WTC11 (cell line): ENCODE measurements at regions of chr11 and their contacts with region 1.

Region 1: GRCh38 chr11:76598426-76598839 is 72.1 kb downstream of the LRRC32 start:
- DNase-seq: peak; percentile 47
- ATAC-seq: peak; percentile 85
- H3K4me3 Mint-ChIP-seq: no peak overlapping the region
- H3K27ac Mint-ChIP-seq: no peak overlapping the region
- H3K4me1 Mint-ChIP-seq: 0 out of 2 replicates have a peak, but pooled peaks cover 7% of the 10 kb centered on the region
- H3K27me3 Mint-ChIP-seq: no peaks in the 10 kb centered on the region
- CTCF ChIP-seq: 0 out of 2 replicates have a peak, but pooled peaks have one; percentile 10

Region 2: DNA sequence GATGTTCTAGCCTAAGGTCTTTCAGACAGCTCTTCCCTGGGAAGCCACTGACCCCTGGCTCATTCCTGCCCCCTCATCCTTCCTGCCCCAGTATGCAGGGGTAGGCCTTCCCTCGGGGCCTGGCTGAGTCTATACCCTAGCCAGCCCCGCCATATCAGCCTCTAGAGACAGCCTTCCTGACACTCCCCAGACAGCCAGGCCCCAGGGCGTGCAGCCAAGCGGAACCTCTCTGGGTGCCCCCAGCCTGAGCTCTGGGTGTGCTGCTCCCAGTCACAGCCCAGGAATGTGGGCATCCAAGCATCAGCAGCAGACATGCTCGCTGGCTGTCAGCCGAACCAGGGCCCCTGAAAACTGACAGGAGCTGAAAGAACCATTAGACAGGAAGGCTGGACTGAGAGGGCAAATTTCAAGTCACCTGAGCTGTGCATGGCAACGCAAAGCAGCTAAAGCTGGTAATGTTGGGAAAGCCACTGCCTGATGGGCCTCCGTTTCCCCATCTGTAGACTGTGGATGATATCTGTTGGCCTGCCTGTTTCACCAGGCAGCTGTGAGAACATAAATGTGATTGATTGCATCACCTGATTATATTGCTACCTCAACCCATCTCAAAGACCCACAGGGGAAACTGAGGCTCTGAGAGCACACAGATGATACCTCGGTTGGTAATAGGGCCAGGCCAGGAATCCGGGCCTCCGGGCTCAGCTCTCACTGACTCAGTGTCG is 21.1 kb before region 1 on chr11:
- CTCF ChIA-PET with region 1: interaction called, 23 read pairs
- POLR2A ChIA-PET with region 1: no interaction called
- DNase-seq: no peak
- ATAC-seq: no peak; the same call in 1 of the 2 replicates
- H3K4me3 Mint-ChIP-seq: no peak overlapping the region
- H3K27ac Mint-ChIP-seq: no peak overlapping the region
- H3K4me1 Mint-ChIP-seq: peaks cover 22% of the 10 kb centered on the region
- H3K27me3 Mint-ChIP-seq: no peaks in the 10 kb centered on the region
- CTCF ChIP-seq: no peak

Region 3: DNA sequence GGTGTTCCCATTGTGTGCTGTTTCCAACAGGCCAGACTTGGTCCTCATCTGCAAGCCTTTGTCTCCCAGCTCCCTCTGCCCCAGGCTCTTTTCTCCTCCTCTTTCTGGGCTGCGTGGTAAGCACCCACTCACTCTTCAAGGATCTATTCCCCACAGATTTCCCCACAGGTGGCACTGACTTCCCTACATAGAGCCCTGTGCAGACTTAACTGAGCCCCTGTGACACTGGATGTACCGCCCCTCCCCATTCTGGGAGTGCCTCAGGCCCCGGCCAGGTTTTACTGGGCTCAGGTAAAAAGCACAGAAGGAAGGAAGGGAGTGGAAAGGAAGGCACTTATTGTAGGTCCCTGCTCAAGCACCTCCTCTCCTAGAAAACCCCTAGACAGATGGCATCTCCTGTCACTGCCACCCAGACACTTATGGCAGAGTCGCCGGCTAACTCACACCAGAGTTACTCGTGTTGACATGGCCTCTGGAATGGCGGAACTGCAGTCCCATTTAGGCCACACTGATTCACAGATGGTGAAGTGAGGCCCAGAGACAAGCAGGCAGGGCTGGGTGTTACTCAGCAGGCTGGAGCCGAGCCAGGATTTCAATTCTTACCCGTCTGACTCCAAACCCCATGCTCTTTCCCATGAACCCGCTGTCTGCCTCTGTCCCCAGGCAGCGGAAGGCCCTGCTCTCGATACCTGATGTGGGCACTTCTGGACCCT is 24.9 kb after region 1 on chr11:
- CTCF ChIA-PET with region 1: no interaction called
- POLR2A ChIA-PET with region 1: no interaction called
- DNase-seq: no peak
- ATAC-seq: no peak
- H3K4me3 Mint-ChIP-seq: no peak overlapping the region
- H3K27ac Mint-ChIP-seq: no peak overlapping the region
- H3K4me1 Mint-ChIP-seq: 0 out of 2 replicates have a peak, but pooled peaks cover 4% of the 10 kb centered on the region
- H3K27me3 Mint-ChIP-seq: peaks cover 4% of the 10 kb centered on the region; the same call in 1 of the 2 replicates
- CTCF ChIP-seq: no peak

Region 4: DNA sequence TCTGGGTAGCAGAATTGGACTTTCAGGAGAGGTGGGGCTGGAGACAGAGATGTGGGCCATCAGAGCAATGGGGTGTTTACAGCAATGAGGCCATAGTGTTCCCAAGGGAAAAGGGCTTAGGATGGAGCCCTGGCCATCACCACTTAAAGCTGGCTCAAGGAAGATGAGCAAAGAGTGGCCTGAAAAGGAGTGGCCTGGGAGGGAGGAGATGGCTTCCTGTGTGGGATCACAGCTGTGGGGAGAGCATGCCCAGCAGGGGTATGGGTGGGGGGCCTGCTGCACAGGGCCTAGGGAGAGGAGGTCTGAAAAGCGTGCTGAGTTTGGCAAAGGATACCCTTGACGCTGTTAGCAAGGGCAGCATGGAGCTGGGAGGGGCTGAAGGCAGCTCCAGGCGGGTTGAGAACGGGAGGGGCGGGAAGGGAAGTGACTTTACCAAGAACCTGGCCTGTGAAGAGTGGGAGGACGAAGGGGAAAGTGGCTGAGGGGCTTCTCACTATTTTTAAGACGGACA is 58.2 kb after region 1 on chr11:
- CTCF ChIA-PET with region 1: interaction called, 14 read pairs
- POLR2A ChIA-PET with region 1: no interaction called
- DNase-seq: no peak
- ATAC-seq: 0 out of 2 replicates have a peak, but pooled peaks have one; percentile 14
- H3K4me3 Mint-ChIP-seq: no peak overlapping the region
- H3K27ac Mint-ChIP-seq: no peak overlapping the region
- H3K4me1 Mint-ChIP-seq: peaks cover 14% of the 10 kb centered on the region
- H3K27me3 Mint-ChIP-seq: no peaks in the 10 kb centered on the region
- CTCF ChIP-seq: no peak

Region 5: GRCh38 chr11:76680518-76681425 is 82.3 kb after region 1 on chr11:
- CTCF ChIA-PET with region 1: interaction called, 60 read pairs
- POLR2A ChIA-PET with region 1: no interaction called
- DNase-seq: peak; percentile 88
- ATAC-seq: peak; percentile 95
- H3K4me3 Mint-ChIP-seq: no peak overlapping the region
- H3K27ac Mint-ChIP-seq: no peak overlapping the region
- H3K4me1 Mint-ChIP-seq: no peaks in the 10 kb centered on the region
- H3K27me3 Mint-ChIP-seq: peaks cover 4% of the 10 kb centered on the region; the same call in 1 of the 2 replicates
- CTCF ChIP-seq: peak; percentile 75

Region 6: GRCh38 chr11:76700177-76701100 is 102.0 kb after region 1 on chr11:
- CTCF ChIA-PET with region 1: interaction called, 11 read pairs
- POLR2A ChIA-PET with region 1: no interaction called
- DNase-seq: no peak
- ATAC-seq: no peak
- H3K4me3 Mint-ChIP-seq: no peak overlapping the region
- H3K27ac Mint-ChIP-seq: no peak overlapping the region
- H3K4me1 Mint-ChIP-seq: peaks cover 47% of the 10 kb centered on the region
- H3K27me3 Mint-ChIP-seq: no peaks in the 10 kb centered on the region
- CTCF ChIP-seq: no peak